Posterior vena cava (tissue), 2 donors: ENCODE measurements at regions of chr17 and their contacts with region 1.

Region 1: GRCh38 chr17:76671123-76671911 is 27.8 kb upstream of the ST6GALNAC1 start:
- DNase-seq: peak; percentile 100

Region 2: GRCh38 chr17:75779231-75779986 is 891.9 kb before region 1 on chr17:
- intact Hi-C with region 1: loop called in 1 of 2 experiments (anchors 10 kb)
- DNase-seq: peak; percentile 99

Region 3: DNA sequence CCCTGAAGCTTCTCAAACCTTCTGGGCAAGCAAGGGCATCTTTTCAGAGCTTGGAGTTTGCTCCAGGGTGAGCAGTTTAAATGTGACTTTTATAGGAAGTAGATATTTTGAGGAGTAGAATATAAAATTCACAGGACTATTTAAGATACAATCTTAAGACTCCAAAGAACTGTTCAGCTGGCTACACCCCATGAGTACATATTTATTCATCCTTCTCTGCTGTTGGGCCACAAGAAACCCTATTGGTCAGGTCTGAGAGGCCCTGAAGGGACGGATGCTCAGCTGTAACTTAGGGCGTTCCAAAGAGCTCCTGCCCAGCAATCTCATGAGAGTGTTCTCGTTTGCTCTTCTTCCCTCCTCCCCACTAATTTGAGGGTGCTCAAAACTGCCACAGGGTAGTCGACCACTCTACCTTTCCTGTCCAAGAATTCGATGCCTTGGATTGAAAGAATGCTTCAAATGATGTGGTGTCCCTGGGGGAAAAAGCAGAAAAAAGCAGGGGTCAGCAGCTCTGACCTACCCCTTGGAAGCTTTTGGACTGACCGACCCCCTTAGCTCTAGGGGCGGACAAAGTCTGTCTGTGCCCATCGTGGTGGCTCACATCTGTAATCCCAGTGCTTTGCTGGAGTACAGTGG is 92.9 kb before region 1 on chr17:
- intact Hi-C with region 1: no loop called
- DNase-seq: no peak

Region 4: GRCh38 chr17:78360371-78361224 is 1689.3 kb after region 1 on chr17:
- intact Hi-C with region 1: loop called in 1 of 2 experiments (anchors 5 kb)
- DNase-seq: peak; percentile 98